Activated naive CD8-positive, alpha-beta T cell treated with anti-CD3 and anti-CD28 coated beads, Interleukin-2, amount 10 ng/mL, durations not matched to agents 7 days and 5 days (primary cell): ENCODE measurements at regions of chr1 and their contacts with region 1.

Region 1: DNA sequence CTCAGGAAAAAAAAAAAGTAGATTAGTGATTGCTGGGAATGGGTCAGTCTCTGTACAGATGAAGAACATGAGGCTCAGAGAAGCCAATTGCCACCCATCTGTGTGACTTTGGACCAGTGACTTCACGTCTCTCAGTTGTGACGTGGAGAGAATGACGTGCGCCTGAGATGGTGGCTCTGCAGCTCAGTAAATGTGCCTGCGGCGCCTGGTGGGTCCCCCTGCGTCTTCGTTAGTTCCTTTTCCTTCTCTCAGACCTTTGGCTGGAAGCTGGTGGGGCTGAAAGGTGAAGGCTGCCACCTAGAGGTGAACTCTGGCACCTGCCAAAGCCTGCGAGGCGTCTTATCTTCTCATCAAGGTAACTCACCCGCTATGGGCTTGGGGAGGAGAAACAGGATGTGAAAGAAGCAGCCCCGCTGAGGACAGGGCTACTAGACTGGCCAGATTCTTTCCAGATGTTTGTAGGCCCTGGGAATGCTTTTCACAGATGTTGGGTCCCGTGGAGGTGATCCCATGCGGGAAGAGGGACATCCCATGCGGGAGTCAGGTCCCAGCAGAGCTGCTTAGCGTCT is 8.7 kb upstream of the E2F2 start:
- DNase-seq: peak; percentile 89
- ATAC-seq: peak; percentile 97
- H3K4me3 Mint-ChIP-seq: peak overlapping the region; percentile 63
- H3K27ac Mint-ChIP-seq: peak overlapping the region; percentile 87
- H3K4me1 Mint-ChIP-seq: peaks cover 14% of the 10 kb centered on the region
- H3K27me3 Mint-ChIP-seq: peaks cover 1% of the 10 kb centered on the region

Region 2: GRCh38 chr1:23484253-23485001 is 55.4 kb before region 1 on chr1:
- POLR2A ChIA-PET with region 1: no interaction called
- DNase-seq: peak; percentile 87
- ATAC-seq: peak; percentile 89
- H3K4me3 Mint-ChIP-seq: peak overlapping the region; percentile 93
- H3K27ac Mint-ChIP-seq: peak overlapping the region; percentile 81
- H3K4me1 Mint-ChIP-seq: peaks cover 14% of the 10 kb centered on the region
- H3K27me3 Mint-ChIP-seq: peaks cover 66% of the 10 kb centered on the region

Region 3: GRCh38 chr1:23496490-23497181 is 43.1 kb before region 1 on chr1:
- POLR2A ChIA-PET with region 1: interaction called, 17 read pairs
- DNase-seq: no peak
- ATAC-seq: no peak
- H3K4me3 Mint-ChIP-seq: no peak overlapping the region
- H3K27ac Mint-ChIP-seq: no peak overlapping the region
- H3K4me1 Mint-ChIP-seq: peaks cover 2% of the 10 kb centered on the region
- H3K27me3 Mint-ChIP-seq: peaks cover 9% of the 10 kb centered on the region

Region 4: GRCh38 chr1:23567996-23568607 is 28.3 kb after region 1 on chr1:
- POLR2A ChIA-PET with region 1: no interaction called
- DNase-seq: no peak
- ATAC-seq: no peak
- H3K4me3 Mint-ChIP-seq: peak overlapping the region; percentile 94
- H3K27ac Mint-ChIP-seq: peak overlapping the region; percentile 83
- H3K4me1 Mint-ChIP-seq: peaks cover 12% of the 10 kb centered on the region
- H3K27me3 Mint-ChIP-seq: peaks cover 33% of the 10 kb centered on the region

Region 5: GRCh38 chr1:23634842-23635651 is 95.3 kb after region 1 on chr1:
- POLR2A ChIA-PET with region 1: interaction called, 40 read pairs
- DNase-seq: peak; percentile 53
- ATAC-seq: peak; percentile 71
- H3K4me3 Mint-ChIP-seq: peak overlapping the region; percentile 67
- H3K27ac Mint-ChIP-seq: peak overlapping the region; percentile 84
- H3K4me1 Mint-ChIP-seq: peaks cover 20% of the 10 kb centered on the region
- H3K27me3 Mint-ChIP-seq: no peaks in the 10 kb centered on the region